Ovary (tissue), 10 donors: ENCODE measurements at regions of chr3 and their contacts with region 1.

Region 1: GRCh38 chr3:122793568-122794416 is at the start of gene HSPBAP1:
- DNase-seq: peak; percentile 88 to 95 (median 90)
- H3K4me3 ChIP-seq: peak within 1 kb of the TSS; percentile 85
- H3K27ac ChIP-seq: peak within 1 kb of the TSS; percentile 93 to 95
- H3K4me1 ChIP-seq: peaks cover 4% of the 10 kb centered on the region
- H3K27me3 ChIP-seq: no peaks in the 10 kb centered on the region
- CTCF ChIP-seq: no peak
- EP300 ChIP-seq: peak; percentile 76
- POLR2A ChIP-seq: peak; percentile 50
- total RNA-seq, gene HSPBAP1: 5.8 to 12.8 (median 9.5) TPM

Region 2: DNA sequence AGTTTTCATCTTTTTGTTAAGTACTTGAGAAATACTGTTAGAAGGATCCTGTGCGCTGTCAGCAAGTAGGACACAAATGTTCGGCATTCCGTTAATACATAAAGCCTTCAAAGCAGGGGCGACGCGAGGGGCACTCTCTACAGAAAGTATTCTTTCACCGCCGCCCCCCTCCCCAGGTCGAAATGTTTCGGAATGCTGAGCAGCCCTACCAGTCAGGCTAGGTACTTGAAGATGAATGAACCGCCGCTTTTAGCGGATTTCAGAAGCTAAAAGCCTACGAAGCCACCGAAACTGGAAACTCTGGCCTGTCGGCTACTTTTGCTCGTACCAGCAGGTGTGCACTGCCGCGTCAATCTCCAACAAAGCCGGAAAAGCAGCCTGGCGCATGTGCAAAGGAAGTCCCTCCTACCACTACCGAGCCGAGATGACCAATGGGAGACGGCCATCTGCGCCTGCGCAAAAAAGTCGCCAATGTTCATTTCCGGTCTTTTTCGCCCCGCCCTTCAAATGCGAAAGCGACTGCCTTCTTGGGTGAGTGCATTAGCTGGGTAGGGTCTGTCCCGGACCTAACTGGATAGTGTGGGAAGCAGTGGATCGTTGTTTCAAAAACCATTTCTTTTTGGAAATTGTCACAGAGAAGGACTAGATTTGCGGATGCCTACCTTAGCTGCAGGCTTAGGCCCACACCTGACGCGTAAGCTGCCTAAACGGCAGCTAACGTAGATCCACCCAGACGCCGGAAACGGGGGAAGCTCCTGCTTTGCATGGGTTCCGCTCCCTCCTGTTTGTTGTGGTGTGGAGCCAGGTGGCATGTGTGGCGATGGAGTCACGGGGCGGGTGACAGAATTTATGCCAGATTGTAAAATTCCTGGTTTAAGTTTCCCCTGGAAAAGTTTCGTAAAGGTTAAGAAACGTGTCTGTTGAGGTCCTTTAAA is 377.8 kb before region 1 on chr3 and contains the start of gene WDR5B:
- intact Hi-C with region 1: loop called in 1 of 4 experiments (anchors 5 kb)
- DNase-seq: peak; percentile 97 to 99 (median 98)
- H3K4me3 ChIP-seq: peak within 1 kb of the TSS; percentile 82
- H3K27ac ChIP-seq: peak within 1 kb of the TSS; percentile 41 to 85
- H3K4me1 ChIP-seq: peaks cover 5% of the 10 kb centered on the region
- H3K27me3 ChIP-seq: no peaks in the 10 kb centered on the region
- CTCF ChIP-seq: peak in 1 of 3 donors; percentile 41
- EP300 ChIP-seq: peak; percentile 26
- POLR2A ChIP-seq: peak; percentile 82
- total RNA-seq, gene WDR5B: 3.1 to 6.3 (median 5.7) TPM

Region 3: GRCh38 chr3:124200407-124200806 is 1406.6 kb after region 1 on chr3:
- intact Hi-C with region 1: no loop called
- DNase-seq: no peak
- H3K4me3 ChIP-seq: no peak overlapping the region
- H3K27ac ChIP-seq: no peak overlapping the region
- H3K4me1 ChIP-seq: peaks cover 9% of the 10 kb centered on the region
- H3K27me3 ChIP-seq: no peaks in the 10 kb centered on the region
- CTCF ChIP-seq: no peak
- EP300 ChIP-seq: no peak
- POLR2A ChIP-seq: no peak